ENCODE measurements at regions of chr3 and their contacts with region 1.

Region 1: DNA sequence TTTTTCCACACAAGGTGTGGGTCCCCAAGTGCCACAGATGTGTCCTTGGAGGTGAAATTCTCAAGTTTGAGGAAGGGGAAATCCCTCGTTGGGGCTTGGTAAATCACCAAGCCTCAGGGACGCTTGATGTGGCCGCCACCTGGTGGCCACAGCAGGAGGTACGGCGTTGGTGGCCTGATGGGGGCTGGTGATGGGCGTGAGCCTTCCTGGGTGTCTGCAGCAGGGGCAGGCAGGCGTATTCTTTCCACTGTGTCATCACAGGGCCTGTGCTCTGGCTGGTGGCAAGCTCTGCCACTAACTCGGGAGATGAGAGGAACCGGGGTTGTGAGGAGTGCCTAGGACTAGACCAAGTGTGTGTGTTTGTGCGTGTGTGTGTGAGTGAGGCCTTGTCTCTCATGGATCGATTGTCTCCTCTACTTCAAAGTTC is 4.2 kb downstream of the ACOX2 start:
- DNase-seq: peak; percentile 55
- ATAC-seq: peak; percentile 61
- H3K4me3 ChIP-seq: no peak overlapping the region
- H3K27ac ChIP-seq: peak overlapping the region; percentile 33
- H3K4me1 ChIP-seq: peaks cover 58% of the 10 kb centered on the region
- H3K27me3 ChIP-seq: no peaks in the 10 kb centered on the region
- CTCF ChIP-seq: peak; percentile 97
- EP300 ChIP-seq: 0 out of 4 replicates have a peak, but pooled peaks of 1 of the 2 experiments have one; percentile 11
- POLR2A ChIP-seq: no peak
- RAD21 ChIP-seq: peak; percentile 89

Region 2: GRCh38 chr3:57692259-57693147 is 840.3 kb before region 1 on chr3 and contains the start of gene DENND6A:
- CTCF ChIA-PET with region 1: no interaction called
- POLR2A ChIA-PET with region 1: no interaction called
- in situ Hi-C with region 1: no loop called
- intact Hi-C with region 1: no loop called
- DNase-seq: peak; percentile 87
- ATAC-seq: peak; percentile 96
- H3K4me3 ChIP-seq: peak within 1 kb of the TSS; percentile 70 to 82 (median 76)
- H3K27ac ChIP-seq: peak within 1 kb of the TSS; percentile 90
- H3K4me1 ChIP-seq: peaks cover 40% of the 10 kb centered on the region
- H3K27me3 ChIP-seq: no peaks in the 10 kb centered on the region
- CTCF ChIP-seq: no peak
- EP300 ChIP-seq: no peak
- POLR2A ChIP-seq: peak; percentile 89
- RAD21 ChIP-seq: peak; percentile 75
- total RNA-seq, gene DENND6A: 9.4 and 12.8 TPM in 2 replicates

Region 3: DNA sequence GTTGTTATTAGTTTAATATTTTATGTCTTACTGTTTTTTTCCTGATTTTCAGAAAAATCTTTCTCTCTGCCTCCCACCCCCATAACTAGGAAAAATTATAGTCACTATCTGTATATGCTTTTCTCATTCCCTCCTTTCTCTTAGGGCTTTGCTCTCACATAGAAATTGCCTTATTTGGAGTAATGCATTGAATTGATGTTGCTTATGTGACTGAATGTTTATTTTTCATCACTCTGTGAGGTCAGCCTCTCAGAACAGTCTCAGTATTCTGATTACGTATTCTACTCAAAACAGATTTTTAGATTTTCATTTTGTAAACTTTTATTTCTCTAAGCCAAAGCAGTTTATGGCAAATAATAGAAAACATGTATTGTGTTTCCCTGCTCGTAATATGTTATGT is 655.7 kb before region 1 on chr3:
- CTCF ChIA-PET with region 1: no interaction called
- POLR2A ChIA-PET with region 1: no interaction called
- in situ Hi-C with region 1: no loop called
- intact Hi-C with region 1: no loop called
- DNase-seq: no peak
- ATAC-seq: no peak
- H3K4me3 ChIP-seq: no peak overlapping the region
- H3K27ac ChIP-seq: no peak overlapping the region
- H3K4me1 ChIP-seq: no peaks in the 10 kb centered on the region
- H3K27me3 ChIP-seq: no peaks in the 10 kb centered on the region
- CTCF ChIP-seq: no peak
- EP300 ChIP-seq: no peak
- POLR2A ChIP-seq: no peak
- RAD21 ChIP-seq: no peak

Region 4: GRCh38 chr3:58305882-58306711 is 226.7 kb before region 1 on chr3 and contains the starts of genes HTD2 and RPP14:
- CTCF ChIA-PET with region 1: no interaction called
- POLR2A ChIA-PET with region 1: interaction called, 33 read pairs
- in situ Hi-C with region 1: no loop called
- intact Hi-C with region 1: no loop called
- DNase-seq: peak; percentile 92
- ATAC-seq: peak; percentile 93
- H3K4me3 ChIP-seq: peak within 1 kb of the TSS; percentile 70 to 95 (median 93)
- H3K27ac ChIP-seq: peak within 1 kb of the TSS; percentile 93
- H3K4me1 ChIP-seq: peaks cover 28% of the 10 kb centered on the region
- H3K27me3 ChIP-seq: peaks cover 0 to 3% of the 10 kb centered on the region in 2 experiments; a peak in 1 of 5 replicates
- CTCF ChIP-seq: peak; percentile 97
- EP300 ChIP-seq: peak in 1 of 2 experiments; percentile 26; a peak in 1 of 4 replicates
- POLR2A ChIP-seq: peak; percentile 70 to 73
- RAD21 ChIP-seq: peak; percentile 44
- total RNA-seq, gene HTD2: 13.7 and 20.1 TPM in 2 replicates
- total RNA-seq, gene RPP14: 15.4 and 21.5 TPM in 2 replicates

Region 5: DNA sequence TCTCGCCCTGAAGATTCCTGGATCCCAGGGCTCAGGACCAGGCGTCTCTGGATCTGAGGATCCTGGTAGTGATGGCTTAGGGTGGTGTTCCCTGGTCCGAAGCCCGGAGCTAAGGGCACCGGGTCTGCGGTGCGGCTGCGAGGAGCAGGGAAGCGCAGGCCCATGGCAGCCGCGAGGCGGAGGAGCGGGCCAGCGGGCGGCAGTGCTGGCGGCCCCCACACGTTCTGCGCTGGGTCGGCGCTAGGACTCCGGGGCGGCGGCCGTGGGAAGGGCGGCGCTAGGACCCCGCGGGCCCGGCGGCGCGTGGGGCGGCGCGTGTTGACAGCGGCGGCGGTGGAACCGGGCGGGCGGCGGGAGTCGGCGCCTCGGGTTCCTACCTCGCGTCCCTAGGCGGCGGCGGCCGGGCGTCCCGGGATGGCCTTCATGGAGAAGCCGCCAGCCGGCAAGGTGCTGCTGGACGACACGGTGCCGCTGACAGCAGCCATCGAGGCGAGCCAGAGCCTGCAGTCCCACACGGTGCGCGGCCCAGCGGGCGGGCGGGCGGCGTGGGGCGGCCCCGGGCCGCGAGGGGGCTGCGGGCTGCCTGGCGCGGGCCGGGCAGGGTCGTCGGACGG is 200.1 kb before region 1 on chr3 and contains the start of gene PXK:
- CTCF ChIA-PET with region 1: no interaction called
- POLR2A ChIA-PET with region 1: no interaction called
- in situ Hi-C with region 1: loop called (anchors 10 kb)
- intact Hi-C with region 1: loop called (anchors 10 kb)
- DNase-seq: peak; percentile 21
- ATAC-seq: peak; percentile 88
- H3K4me3 ChIP-seq: peak within 1 kb of the TSS; percentile 82 to 96 (median 91)
- H3K27ac ChIP-seq: peak within 1 kb of the TSS; percentile 49
- H3K4me1 ChIP-seq: peaks cover 40% of the 10 kb centered on the region
- H3K27me3 ChIP-seq: no peaks in the 10 kb centered on the region; a peak in 1 of 5 replicates
- CTCF ChIP-seq: no peak; the same call in none of the 2 replicates
- EP300 ChIP-seq: no peak
- POLR2A ChIP-seq: no peak
- RAD21 ChIP-seq: peak; percentile 70
- total RNA-seq, gene PXK: 5.8 and 6.4 TPM in 2 replicates

Region 6: DNA sequence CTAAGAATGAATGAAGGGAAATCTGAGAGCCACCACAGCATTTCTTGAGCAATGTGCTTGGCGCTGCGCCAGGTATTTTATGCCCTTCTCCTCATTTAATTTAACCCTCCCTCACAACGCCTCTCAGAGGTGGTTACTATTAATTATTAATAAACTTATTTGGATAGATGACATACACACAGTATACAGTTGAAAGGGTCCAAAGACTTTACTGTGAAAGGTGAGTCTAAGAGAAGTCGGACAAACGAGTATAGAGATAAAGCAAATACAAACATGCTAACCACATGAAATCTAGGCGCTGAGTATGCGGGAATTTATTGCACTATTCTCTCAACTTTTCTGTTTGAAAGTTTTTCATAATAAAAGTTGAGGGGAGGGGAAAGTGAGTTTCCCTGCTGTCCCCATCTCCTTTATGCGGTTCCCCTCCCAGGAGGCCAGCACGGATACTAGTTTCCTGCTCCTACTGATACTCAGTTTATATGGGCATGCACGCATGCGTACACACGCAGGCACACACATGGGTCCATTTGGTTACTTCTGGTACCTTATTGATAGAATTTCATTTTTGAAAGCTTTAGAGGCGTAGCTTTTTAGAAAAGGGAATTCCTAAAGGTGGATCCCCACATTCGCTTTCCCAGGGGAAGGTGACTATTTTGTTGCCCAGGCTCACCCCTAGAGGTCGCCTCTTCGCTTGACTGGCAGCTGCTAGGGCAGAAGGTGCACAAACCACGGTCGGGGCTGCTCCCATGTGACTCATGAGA is 69.4 kb before region 1 on chr3:
- CTCF ChIA-PET with region 1: interaction called, 12 read pairs
- POLR2A ChIA-PET with region 1: interaction called, 3 read pairs
- in situ Hi-C with region 1: no loop called
- intact Hi-C with region 1: loop called (anchors 2 kb)
- DNase-seq: peak; percentile 70
- ATAC-seq: peak; percentile 95
- H3K4me3 ChIP-seq: peak overlapping the region; percentile 44 to 55 (median 54)
- H3K27ac ChIP-seq: peak overlapping the region; percentile 82
- H3K4me1 ChIP-seq: peaks cover 29% of the 10 kb centered on the region
- H3K27me3 ChIP-seq: no peaks in the 10 kb centered on the region
- CTCF ChIP-seq: peak; percentile 95
- EP300 ChIP-seq: no peak
- POLR2A ChIP-seq: 0 out of 4 replicates have a peak, but pooled peaks of 1 of the 2 experiments have one; percentile 50
- RAD21 ChIP-seq: peak; percentile 84

Region 7: DNA sequence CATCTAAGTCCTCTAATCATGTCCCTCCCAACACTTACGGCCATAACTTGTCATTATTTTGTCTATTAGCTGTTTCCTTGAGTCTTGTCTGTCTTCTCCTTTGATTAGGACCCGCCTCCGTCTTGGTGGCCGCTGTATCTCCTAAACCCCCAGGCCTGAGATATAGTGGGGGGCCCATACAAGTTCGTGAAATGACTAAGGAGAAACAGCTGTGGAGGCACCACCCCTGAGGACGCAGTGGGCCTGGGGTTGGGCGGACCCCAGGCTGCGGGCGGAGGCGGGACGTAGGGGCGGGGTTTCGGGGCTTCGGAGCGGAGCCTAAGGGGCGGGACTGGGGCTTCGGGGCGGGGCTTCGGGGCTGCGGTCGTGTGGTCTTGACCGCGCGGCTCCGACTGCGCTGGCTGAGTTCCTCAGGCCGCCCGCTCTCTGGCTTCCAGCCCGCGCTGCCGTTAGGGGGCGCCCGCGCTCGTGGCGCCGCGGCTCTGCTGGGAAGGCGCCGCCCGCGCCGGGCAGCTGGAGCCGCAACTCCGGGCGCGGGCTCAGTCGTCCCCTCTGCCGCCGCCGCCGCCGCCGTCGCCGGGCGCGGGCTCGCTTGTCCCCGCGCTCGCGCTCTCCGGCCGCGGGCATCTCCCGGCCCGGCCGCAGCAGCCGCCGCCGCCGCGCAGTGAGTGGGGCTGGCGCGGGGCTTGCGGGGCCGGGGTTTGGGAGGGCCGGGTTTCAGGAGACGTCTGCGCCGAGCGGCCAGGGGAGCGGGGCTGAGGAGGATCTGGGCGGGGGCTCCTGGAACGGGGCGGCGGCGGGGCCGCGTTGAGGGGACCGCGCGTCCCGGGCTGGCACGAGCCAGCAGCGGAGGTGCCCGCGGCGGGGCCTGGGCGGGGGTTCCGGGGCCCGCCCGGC is 41.1 kb before region 1 on chr3 and contains the start of gene KCTD6:
- CTCF ChIA-PET with region 1: interaction called, 4 read pairs
- POLR2A ChIA-PET with region 1: interaction called, 28 read pairs
- in situ Hi-C with region 1: no loop called
- intact Hi-C with region 1: loop called (anchors 2 kb)
- DNase-seq: peak; percentile 81
- ATAC-seq: peak; percentile 93
- H3K4me3 ChIP-seq: peak within 1 kb of the TSS; percentile 69 to 83 (median 78)
- H3K27ac ChIP-seq: peak within 1 kb of the TSS; percentile 42
- H3K4me1 ChIP-seq: peaks cover 84% of the 10 kb centered on the region
- H3K27me3 ChIP-seq: no peaks in the 10 kb centered on the region; a peak in 3 of 5 replicates
- CTCF ChIP-seq: peak; percentile 82
- EP300 ChIP-seq: peak in 1 of 2 experiments; percentile 19; a peak in 1 of 4 replicates
- POLR2A ChIP-seq: no peak; a peak in 1 of 4 replicates
- RAD21 ChIP-seq: peak; percentile 98
- total RNA-seq, gene KCTD6: 14.0 and 14.2 TPM in 2 replicates

Region 8: DNA sequence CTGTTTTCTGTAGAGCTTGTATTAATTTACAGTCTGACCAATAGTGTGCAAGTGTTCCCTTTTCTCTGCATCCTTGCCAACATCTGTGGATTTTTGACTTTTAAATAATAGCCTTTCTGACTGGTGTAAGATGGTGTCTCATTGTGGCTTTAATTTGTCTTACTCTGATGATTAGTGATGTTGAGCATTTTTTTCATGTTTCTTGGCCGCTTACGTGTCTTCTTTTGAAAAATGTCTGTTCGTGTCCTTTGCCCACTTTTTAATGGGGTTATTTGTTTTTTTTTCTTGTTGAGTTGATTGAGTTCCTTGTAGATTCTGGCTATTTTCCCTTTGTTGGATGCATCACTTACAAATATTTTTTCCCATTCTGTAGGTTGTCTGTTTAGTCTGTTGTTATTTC is 11.7 kb after region 1 on chr3:
- CTCF ChIA-PET with region 1: no interaction called
- POLR2A ChIA-PET with region 1: interaction called, 10 read pairs
- in situ Hi-C with region 1: no loop called
- intact Hi-C with region 1: no loop called
- DNase-seq: no peak
- ATAC-seq: no peak
- H3K4me3 ChIP-seq: no peak overlapping the region
- H3K27ac ChIP-seq: no peak overlapping the region
- H3K4me1 ChIP-seq: peaks cover 9% of the 10 kb centered on the region
- H3K27me3 ChIP-seq: no peaks in the 10 kb centered on the region
- CTCF ChIP-seq: no peak
- EP300 ChIP-seq: no peak
- POLR2A ChIP-seq: no peak
- RAD21 ChIP-seq: no peak

Region 9: DNA sequence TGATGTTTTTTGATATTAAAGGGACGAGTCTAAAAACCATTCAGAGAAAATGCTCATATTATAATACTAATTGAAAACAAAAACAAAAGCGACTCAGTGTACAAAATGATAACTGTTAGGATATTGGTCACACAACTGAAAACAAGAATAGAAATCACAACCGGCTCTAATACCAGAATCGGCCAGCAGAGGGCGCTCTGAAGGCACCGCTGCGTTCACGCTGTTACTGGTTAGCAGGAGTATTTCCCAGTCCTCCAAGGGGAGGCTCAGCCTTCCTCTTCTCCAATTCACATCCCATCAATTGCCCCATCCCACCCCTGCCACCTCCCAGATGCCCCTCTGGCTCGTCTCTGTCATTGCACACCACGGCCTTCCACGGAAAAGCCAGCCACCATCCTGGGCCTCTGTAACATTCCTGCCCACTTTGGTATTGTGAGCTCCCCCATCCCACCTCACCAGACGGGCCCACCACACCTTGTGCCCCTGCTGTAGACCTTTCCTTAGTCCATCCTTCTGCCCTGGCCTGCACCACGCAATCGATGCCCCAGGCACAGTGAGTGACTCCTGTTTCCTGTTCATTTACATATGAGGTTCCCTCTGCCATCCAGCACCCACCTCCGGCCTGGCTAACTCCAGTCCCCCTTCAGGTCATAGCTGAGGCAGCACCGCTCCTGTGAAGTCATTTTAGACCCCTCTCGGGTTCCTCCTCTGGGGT is 35.9 kb after region 1 on chr3:
- CTCF ChIA-PET with region 1: interaction called, 6 read pairs
- POLR2A ChIA-PET with region 1: interaction called, 18 read pairs
- in situ Hi-C with region 1: no loop called
- intact Hi-C with region 1: no loop called
- DNase-seq: peak; percentile 35
- ATAC-seq: peak; percentile 55
- H3K4me3 ChIP-seq: no peak overlapping the region
- H3K27ac ChIP-seq: no peak overlapping the region
- H3K4me1 ChIP-seq: peaks cover 30% of the 10 kb centered on the region
- H3K27me3 ChIP-seq: no peaks in the 10 kb centered on the region
- CTCF ChIP-seq: peak; percentile 82
- EP300 ChIP-seq: no peak
- POLR2A ChIP-seq: no peak
- RAD21 ChIP-seq: peak; percentile 44; the same call in 1 of the 2 replicates

Region 10: GRCh38 chr3:59027607-59028006 is 494.8 kb after region 1 on chr3:
- CTCF ChIA-PET with region 1: no interaction called
- POLR2A ChIA-PET with region 1: no interaction called
- in situ Hi-C with region 1: no loop called
- intact Hi-C with region 1: no loop called
- DNase-seq: no peak
- ATAC-seq: no peak
- H3K4me3 ChIP-seq: no peak overlapping the region
- H3K27ac ChIP-seq: no peak overlapping the region
- H3K4me1 ChIP-seq: no peaks in the 10 kb centered on the region
- H3K27me3 ChIP-seq: no peaks in the 10 kb centered on the region
- CTCF ChIP-seq: no peak
- EP300 ChIP-seq: no peak
- POLR2A ChIP-seq: no peak
- RAD21 ChIP-seq: no peak

Measured in HepG2 (cell line).